GM12878 (cell line): ENCODE measurements at regions of chr14 and their contacts with region 1.

Region 1: DNA sequence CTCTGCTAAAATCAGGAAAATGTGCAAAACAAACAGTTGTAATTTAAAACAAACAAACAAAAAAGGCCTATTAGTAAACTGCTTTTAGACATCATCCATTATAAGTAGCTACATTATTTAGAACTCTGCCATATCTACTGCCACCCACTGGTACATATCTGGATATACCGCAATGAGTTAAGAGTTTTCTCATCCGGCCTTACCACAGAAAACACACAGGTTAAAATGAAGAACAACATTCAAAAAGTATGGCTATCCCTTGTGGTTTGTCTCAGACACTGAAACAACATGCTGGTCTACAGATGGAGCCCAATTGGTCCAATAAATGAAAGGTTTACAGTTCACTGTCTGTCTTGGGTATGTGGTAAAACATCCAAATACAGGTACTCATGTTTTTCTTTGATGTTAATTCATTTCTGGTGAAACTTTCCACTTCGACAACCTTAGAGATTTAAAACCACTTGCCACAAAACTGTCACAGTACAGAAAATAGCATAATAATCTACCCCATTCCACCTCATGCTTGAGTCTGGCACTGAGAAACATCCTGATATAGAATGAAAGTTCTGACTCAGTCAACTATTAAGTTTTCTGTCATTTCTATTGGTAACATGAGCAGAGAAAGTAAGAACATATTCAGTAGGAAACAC is 354.3 kb downstream of the CEP128 start:
- DNase-seq: peak; percentile 89
- ATAC-seq: peak; percentile 97
- H3K4me3 ChIP-seq: no peak overlapping the region
- H3K27ac ChIP-seq: no peak overlapping the region
- H3K4me1 ChIP-seq: peaks cover 9% of the 10 kb centered on the region; the same call in 1 of the 2 replicates
- H3K27me3 ChIP-seq: no peaks in the 10 kb centered on the region
- CTCF ChIP-seq: peak; percentile 36 to 58 (median 46); a peak in 5 of 6 replicates
- EP300 ChIP-seq: peak; percentile 36 to 71; a peak in 2 of 4 replicates
- POLR2A ChIP-seq: no peak
- RAD21 ChIP-seq: peak; percentile 44

Region 2: GRCh38 chr14:80202888-80203562 is 384.2 kb before region 1 on chr14:
- CTCF ChIA-PET with region 1: interaction called, 10 read pairs
- POLR2A ChIA-PET with region 1: no interaction called
- RAD21 ChIA-PET with region 1: interaction called, 4 read pairs
- SMC1A ChIA-PET with region 1: interaction called, 4 read pairs
- in situ Hi-C with region 1: no loop called
- intact Hi-C with region 1: no loop called
- DNase-seq: no peak
- ATAC-seq: peak; percentile 71
- H3K4me3 ChIP-seq: no peak overlapping the region
- H3K27ac ChIP-seq: no peak overlapping the region
- H3K4me1 ChIP-seq: no peaks in the 10 kb centered on the region
- H3K27me3 ChIP-seq: no peaks in the 10 kb centered on the region
- CTCF ChIP-seq: peak; percentile 56 to 79 (median 65)
- EP300 ChIP-seq: no peak
- POLR2A ChIP-seq: no peak
- RAD21 ChIP-seq: peak; percentile 41

Region 3: GRCh38 chr14:80425686-80426085 is 161.5 kb before region 1 on chr14:
- CTCF ChIA-PET with region 1: no interaction called
- POLR2A ChIA-PET with region 1: no interaction called
- RAD21 ChIA-PET with region 1: no interaction called
- SMC1A ChIA-PET with region 1: no interaction called
- in situ Hi-C with region 1: no loop called
- intact Hi-C with region 1: no loop called
- DNase-seq: no peak
- ATAC-seq: no peak
- H3K4me3 ChIP-seq: no peak overlapping the region
- H3K27ac ChIP-seq: no peak overlapping the region
- H3K4me1 ChIP-seq: no peaks in the 10 kb centered on the region
- H3K27me3 ChIP-seq: no peaks in the 10 kb centered on the region
- CTCF ChIP-seq: no peak
- EP300 ChIP-seq: no peak
- POLR2A ChIP-seq: no peak
- RAD21 ChIP-seq: no peak

Region 4: DNA sequence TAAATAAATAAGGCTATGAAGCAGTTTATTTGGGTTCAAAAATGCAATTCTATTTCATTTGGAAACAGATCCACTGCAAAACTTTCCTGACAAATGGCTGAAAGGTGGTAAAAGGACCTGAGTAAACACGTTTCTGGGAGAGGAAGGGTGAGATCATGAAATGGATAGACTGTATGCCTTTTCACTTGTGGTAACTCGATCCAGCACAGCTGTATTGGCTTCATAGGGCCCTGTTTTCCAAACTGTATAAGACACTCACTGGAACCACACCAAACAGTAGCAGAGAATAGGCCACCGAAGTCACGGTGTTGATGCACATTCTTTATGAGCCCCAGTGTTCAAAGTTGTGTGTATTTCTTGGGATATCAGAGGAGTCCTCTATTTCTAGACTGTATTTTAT is 50.7 kb before region 1 on chr14:
- CTCF ChIA-PET with region 1: no interaction called
- POLR2A ChIA-PET with region 1: no interaction called
- RAD21 ChIA-PET with region 1: no interaction called
- SMC1A ChIA-PET with region 1: no interaction called
- in situ Hi-C with region 1: no loop called
- intact Hi-C with region 1: no loop called
- DNase-seq: no peak
- ATAC-seq: no peak
- H3K4me3 ChIP-seq: no peak overlapping the region
- H3K27ac ChIP-seq: no peak overlapping the region
- H3K4me1 ChIP-seq: no peaks in the 10 kb centered on the region
- H3K27me3 ChIP-seq: no peaks in the 10 kb centered on the region
- CTCF ChIP-seq: no peak
- EP300 ChIP-seq: no peak
- POLR2A ChIP-seq: no peak
- RAD21 ChIP-seq: no peak